CD8-positive, alpha-beta T cell (primary cell): ENCODE measurements at regions of chr22 and their contacts with region 1.

Region 1: DNA sequence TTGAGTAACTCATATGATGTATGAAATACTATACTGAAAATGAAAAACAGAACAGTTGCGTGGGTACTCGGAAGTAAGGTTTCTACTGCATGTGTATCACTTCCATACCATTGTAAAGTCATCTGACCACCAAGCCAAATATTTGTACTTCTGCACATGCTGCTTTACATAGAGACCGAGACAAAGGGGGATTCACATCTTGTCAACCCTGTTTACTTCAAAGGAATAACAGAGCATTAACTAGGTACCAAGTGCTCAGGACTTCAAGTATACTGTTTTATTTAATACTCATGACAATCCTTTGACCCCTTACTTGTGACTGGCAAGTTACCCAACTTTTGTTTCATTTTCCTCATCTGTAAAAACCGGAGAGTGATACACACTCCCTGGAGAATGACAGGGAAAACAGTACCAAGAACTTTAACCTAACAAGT is 9.9 kb downstream of the MAPK1 start:
- DNase-seq: no peak
- ATAC-seq: no peak
- H3K4me3 ChIP-seq: no peak overlapping the region
- H3K4me3 Mint-ChIP-seq: no peak overlapping the region
- H3K27ac ChIP-seq: no peak overlapping the region
- H3K27ac Mint-ChIP-seq: peak overlapping the region; percentile 30
- H3K4me1 ChIP-seq: peaks cover 52% of the 10 kb centered on the region
- H3K4me1 Mint-ChIP-seq: peaks cover 87% of the 10 kb centered on the region
- H3K27me3 ChIP-seq: no peaks in the 10 kb centered on the region
- H3K27me3 Mint-ChIP-seq: no peaks in the 10 kb centered on the region
- CTCF ChIP-seq: no peak

Region 2: DNA sequence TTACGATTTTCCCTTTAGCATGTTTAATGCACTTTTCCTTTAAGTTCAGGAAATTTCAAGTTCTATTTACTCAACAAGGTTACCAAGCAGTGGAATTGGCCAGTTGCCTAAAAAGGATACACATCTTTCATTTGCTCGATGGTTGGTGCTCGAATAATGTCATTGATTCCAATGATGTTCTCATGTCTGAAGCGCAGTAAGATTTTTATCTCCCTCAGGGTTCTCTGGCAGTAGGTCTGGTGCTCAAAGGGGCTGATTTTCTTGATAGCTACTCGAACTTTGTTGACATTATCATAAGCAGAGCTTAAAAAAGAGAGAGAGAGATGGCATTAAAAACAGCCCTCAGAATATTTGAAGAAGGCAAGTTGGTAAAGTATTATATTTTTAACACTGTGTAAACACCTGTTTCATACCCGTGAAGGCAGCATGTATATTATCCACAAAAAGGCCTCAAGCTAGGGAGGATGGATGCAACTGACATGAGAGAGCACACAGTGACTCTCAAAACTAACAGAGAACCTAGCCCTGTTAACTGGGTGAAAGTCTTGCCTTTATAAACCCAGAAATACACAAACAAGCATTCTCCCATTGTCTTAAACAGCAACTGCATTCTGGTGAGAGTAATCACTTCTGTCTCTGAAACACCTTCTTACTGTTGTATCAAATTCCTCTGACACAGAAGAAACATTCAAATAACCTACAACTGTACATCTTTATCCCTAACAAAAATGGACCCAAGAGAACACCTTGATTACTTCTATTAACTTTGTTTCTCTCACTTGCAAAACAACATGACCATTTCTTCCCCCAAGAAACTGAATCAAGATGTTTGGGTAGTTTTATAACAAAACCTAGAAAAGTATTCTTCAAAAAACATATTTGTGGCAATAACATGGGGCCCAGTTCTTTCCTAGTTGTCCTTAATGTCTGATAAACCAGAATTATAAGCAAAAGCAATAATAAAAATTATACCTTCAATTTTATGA is 49.7 kb before region 1 on chr22:
- CTCF ChIA-PET with region 1: no interaction called
- POLR2A ChIA-PET with region 1: no interaction called
- intact Hi-C with region 1: loop called in 1 of 2 experiments (anchors 10 kb)
- DNase-seq: no peak
- ATAC-seq: no peak
- H3K4me3 ChIP-seq: no peak overlapping the region
- H3K4me3 Mint-ChIP-seq: no peak overlapping the region
- H3K27ac ChIP-seq: no peak overlapping the region
- H3K27ac Mint-ChIP-seq: peak overlapping the region; percentile 38
- H3K4me1 ChIP-seq: no peaks in the 10 kb centered on the region
- H3K4me1 Mint-ChIP-seq: peaks cover 22% of the 10 kb centered on the region
- H3K27me3 ChIP-seq: no peaks in the 10 kb centered on the region
- H3K27me3 Mint-ChIP-seq: no peaks in the 10 kb centered on the region
- CTCF ChIP-seq: no peak

Region 3: GRCh38 chr22:22019659-22020424 is 162.3 kb after region 1 on chr22:
- CTCF ChIA-PET with region 1: no interaction called
- POLR2A ChIA-PET with region 1: no interaction called
- intact Hi-C with region 1: no loop called
- DNase-seq: no peak
- ATAC-seq: no peak
- H3K4me3 ChIP-seq: no peak overlapping the region
- H3K4me3 Mint-ChIP-seq: no peak overlapping the region
- H3K27ac ChIP-seq: no peak overlapping the region
- H3K27ac Mint-ChIP-seq: no peak overlapping the region
- H3K4me1 ChIP-seq: no peaks in the 10 kb centered on the region
- H3K4me1 Mint-ChIP-seq: no peaks in the 10 kb centered on the region
- H3K27me3 ChIP-seq: no peaks in the 10 kb centered on the region
- H3K27me3 Mint-ChIP-seq: peaks cover 5% of the 10 kb centered on the region
- CTCF ChIP-seq: no peak